Calu3 (cell line): ENCODE measurements at regions of chr13 and their contacts with region 1.

Region 1: GRCh38 chr13:102460801-102461200 is 59.0 kb upstream of the FGF14 start:
- DNase-seq: no peak
- H3K4me3 Mint-ChIP-seq: no peak overlapping the region
- H3K27ac Mint-ChIP-seq: no peak overlapping the region
- H3K4me1 Mint-ChIP-seq: no peaks in the 10 kb centered on the region
- H3K27me3 Mint-ChIP-seq: peaks cover 7% of the 10 kb centered on the region
- CTCF ChIP-seq: no peak

Region 2: GRCh38 chr13:102197193-102197592 is 263.6 kb before region 1 on chr13:
- CTCF ChIA-PET with region 1: interaction called, 3 read pairs
- intact Hi-C with region 1: loop called (anchors 5 kb)
- DNase-seq: peak; percentile 6
- H3K4me3 Mint-ChIP-seq: no peak overlapping the region
- H3K27ac Mint-ChIP-seq: no peak overlapping the region
- H3K4me1 Mint-ChIP-seq: peaks cover 10% of the 10 kb centered on the region
- H3K27me3 Mint-ChIP-seq: no peaks in the 10 kb centered on the region
- CTCF ChIP-seq: no peak

Region 3: DNA sequence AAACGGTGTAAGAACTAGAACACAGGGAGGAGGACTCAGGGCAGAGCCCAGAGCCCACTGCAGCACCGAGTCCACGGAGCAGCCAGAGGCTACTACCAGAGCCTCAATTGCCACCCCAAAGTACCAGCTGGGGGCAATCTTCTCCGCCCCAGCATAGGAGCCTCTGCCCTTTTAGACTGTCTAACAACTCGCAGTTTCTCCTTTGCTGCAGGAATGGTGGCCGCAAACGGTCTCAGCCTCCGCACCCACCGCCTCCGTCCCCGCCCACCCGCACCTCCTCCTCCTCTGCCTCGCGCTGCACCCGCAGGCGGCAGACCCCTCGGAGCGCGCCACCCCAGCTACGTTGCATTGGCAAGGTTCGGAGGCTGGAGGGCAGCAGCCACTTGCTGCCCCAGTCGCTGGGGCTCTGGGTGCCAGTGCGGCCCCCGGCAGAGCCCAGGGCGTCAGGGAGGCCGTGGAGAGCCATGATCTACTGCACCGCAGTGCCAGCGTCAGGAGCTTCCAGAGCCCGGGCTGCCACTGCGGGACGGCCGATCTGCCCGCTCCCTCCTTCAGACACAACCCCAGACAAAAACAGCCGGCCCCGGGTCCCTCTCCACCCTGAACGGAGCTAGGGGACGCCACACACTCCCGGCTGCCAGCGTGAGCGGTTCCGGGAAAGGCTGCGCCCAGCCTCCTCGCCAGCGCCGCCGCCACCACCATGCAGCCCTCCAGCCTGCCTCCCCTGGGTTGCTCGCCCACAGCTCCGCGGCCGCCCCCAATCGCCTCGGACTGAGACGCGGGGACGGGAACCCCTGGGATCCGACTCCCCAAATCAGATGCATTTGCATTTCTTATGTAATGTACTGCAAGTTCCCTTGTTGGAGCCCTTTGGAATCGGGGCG is 60.8 kb before region 1 on chr13:
- CTCF ChIA-PET with region 1: no interaction called
- intact Hi-C with region 1: loop called (anchors 1 kb)
- DNase-seq: peak; percentile 4
- H3K4me3 Mint-ChIP-seq: peak overlapping the region; percentile 57
- H3K27ac Mint-ChIP-seq: no peak overlapping the region
- H3K4me1 Mint-ChIP-seq: no peaks in the 10 kb centered on the region
- H3K27me3 Mint-ChIP-seq: peaks cover 25% of the 10 kb centered on the region
- CTCF ChIP-seq: no peak

Region 4: GRCh38 chr13:102555917-102556553 is 95.2 kb after region 1 on chr13:
- CTCF ChIA-PET with region 1: no interaction called
- intact Hi-C with region 1: loop called (anchors 5 kb)
- DNase-seq: no peak
- H3K4me3 Mint-ChIP-seq: no peak overlapping the region
- H3K27ac Mint-ChIP-seq: no peak overlapping the region
- H3K4me1 Mint-ChIP-seq: no peaks in the 10 kb centered on the region
- H3K27me3 Mint-ChIP-seq: no peaks in the 10 kb centered on the region
- CTCF ChIP-seq: no peak